ENCODE measurements at regions of chr21 and their contacts with region 1.

Region 1: DNA sequence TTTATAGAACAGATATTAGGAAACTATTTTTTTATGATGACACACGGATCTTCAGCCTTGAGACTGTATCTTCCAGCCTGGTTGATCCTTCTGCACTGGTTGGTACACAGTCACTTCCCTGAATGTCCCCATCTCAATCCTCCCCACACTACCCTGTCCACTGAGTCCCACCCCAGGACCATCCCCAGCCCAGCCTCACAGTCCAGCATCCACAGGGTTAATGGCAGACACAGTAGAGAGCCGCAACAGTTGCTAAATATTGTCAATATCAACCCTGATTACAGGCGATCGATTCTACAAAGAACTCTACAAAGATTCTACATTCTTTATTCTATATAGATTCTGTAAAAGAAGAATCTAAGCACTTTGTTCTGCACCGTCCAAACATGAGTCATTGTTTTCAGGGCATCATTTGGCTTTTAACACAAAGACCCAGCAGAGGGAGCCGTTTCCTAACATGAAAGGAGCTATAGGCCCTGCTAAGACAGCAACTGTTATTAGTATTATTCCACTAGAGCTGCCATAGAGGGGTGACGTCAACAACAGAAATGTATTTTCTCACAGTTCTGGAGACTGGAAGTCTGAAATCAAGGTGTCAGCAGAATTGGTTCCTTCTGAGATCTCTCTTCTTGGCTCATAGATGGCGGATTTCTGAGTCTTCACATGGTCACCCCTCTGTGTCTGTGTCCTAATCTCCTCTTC is 30.1 kb upstream of the IFNAR2 start:
- DNase-seq: peak; percentile 85
- H3K4me3 Mint-ChIP-seq: no peak overlapping the region
- H3K27ac Mint-ChIP-seq: peak overlapping the region; percentile 39
- H3K4me1 Mint-ChIP-seq: peaks cover 24% of the 10 kb centered on the region
- H3K27me3 Mint-ChIP-seq: no peaks in the 10 kb centered on the region

Region 2: GRCh38 chr21:32674731-32675130 is 524.9 kb before region 1 on chr21:
- CTCF ChIA-PET with region 1: no interaction called
- POLR2A ChIA-PET with region 1: no interaction called
- intact Hi-C with region 1: no loop called
- DNase-seq: no peak
- H3K4me3 Mint-ChIP-seq: no peak overlapping the region
- H3K27ac Mint-ChIP-seq: no peak overlapping the region
- H3K4me1 Mint-ChIP-seq: no peaks in the 10 kb centered on the region
- H3K27me3 Mint-ChIP-seq: no peaks in the 10 kb centered on the region

Region 3: GRCh38 chr21:32921632-32922230 is 277.9 kb before region 1 on chr21:
- CTCF ChIA-PET with region 1: interaction called, 24 read pairs
- POLR2A ChIA-PET with region 1: no interaction called
- intact Hi-C with region 1: no loop called
- DNase-seq: peak; percentile 59
- H3K4me3 Mint-ChIP-seq: no peak overlapping the region
- H3K27ac Mint-ChIP-seq: no peak overlapping the region
- H3K4me1 Mint-ChIP-seq: peaks cover 2% of the 10 kb centered on the region
- H3K27me3 Mint-ChIP-seq: peaks cover 2% of the 10 kb centered on the region

Region 4: DNA sequence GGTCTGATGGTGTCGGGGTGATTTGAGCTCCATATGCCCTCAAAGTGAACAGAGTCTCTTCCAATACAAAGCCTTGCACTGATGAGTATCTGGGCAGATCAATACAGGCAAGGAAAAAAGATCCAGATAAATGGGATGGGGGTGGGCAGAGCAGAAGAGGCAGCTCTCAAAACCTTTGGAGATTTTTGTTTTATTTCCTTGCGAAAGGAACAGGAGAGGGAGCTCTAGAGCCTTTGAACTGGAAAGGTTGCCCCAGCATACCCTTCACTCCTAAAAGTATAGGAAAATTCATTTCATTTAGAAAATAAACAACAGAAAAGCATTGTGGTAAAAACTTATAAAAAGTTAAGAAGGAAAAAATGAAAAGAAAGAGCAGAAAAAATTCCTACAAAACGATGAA is 205.4 kb before region 1 on chr21:
- CTCF ChIA-PET with region 1: interaction called, 17 read pairs
- POLR2A ChIA-PET with region 1: no interaction called
- intact Hi-C with region 1: loop called (anchors 5 kb)
- DNase-seq: no peak
- H3K4me3 Mint-ChIP-seq: no peak overlapping the region
- H3K27ac Mint-ChIP-seq: no peak overlapping the region
- H3K4me1 Mint-ChIP-seq: no peaks in the 10 kb centered on the region
- H3K27me3 Mint-ChIP-seq: peaks cover 16% of the 10 kb centered on the region

Region 5: GRCh38 chr21:33127154-33127893 is 72.3 kb before region 1 on chr21:
- CTCF ChIA-PET with region 1: interaction called, 12 read pairs
- POLR2A ChIA-PET with region 1: no interaction called
- intact Hi-C with region 1: loop called (anchors 2 kb)
- DNase-seq: peak; percentile 77
- H3K4me3 Mint-ChIP-seq: peak overlapping the region; percentile 38
- H3K27ac Mint-ChIP-seq: no peak overlapping the region
- H3K4me1 Mint-ChIP-seq: peaks cover 3% of the 10 kb centered on the region
- H3K27me3 Mint-ChIP-seq: peaks cover 14% of the 10 kb centered on the region

Region 6: GRCh38 chr21:33324291-33325221 is 124.9 kb after region 1 on chr21 and contains the start of gene IFNAR1:
- CTCF ChIA-PET with region 1: interaction called, 7 read pairs
- POLR2A ChIA-PET with region 1: no interaction called
- intact Hi-C with region 1: loop called (anchors 1 kb)
- DNase-seq: peak; percentile 99
- H3K4me3 Mint-ChIP-seq: no peak within 1 kb of the TSS
- H3K27ac Mint-ChIP-seq: no peak within 1 kb of the TSS
- H3K4me1 Mint-ChIP-seq: peaks cover 26% of the 10 kb centered on the region
- H3K27me3 Mint-ChIP-seq: no peaks in the 10 kb centered on the region
- total RNA-seq, gene IFNAR1: 28.0 to 32.0 TPM

Region 7: DNA sequence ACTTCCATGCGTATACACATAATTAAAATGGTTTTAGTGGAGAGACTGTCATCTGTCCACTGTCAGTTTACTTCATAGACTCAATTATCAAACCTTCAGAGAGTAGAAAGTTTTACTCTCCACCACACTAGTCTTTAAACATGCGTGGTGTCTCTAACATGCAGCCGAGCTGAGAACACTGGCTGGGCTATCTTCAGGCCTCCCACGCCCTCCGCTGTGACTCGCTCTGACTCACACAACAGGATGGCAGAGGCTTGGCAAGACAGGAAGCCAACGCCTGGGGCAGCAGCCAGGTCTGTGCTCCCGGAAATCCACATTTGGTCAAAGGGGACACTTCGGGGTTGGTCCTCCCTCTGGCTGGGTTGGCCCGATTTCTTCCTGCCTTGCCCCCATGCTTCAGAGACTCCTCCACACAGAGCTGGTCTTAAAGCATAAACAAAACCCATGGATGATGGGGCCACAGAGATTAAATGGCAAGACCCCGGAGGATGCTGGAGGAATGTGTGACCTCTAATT is 180.9 kb after region 1 on chr21:
- CTCF ChIA-PET with region 1: interaction called, 18 read pairs
- POLR2A ChIA-PET with region 1: interaction called, 3 read pairs
- intact Hi-C with region 1: no loop called
- DNase-seq: peak; percentile 97
- H3K4me3 Mint-ChIP-seq: peak overlapping the region; percentile 44
- H3K27ac Mint-ChIP-seq: peak overlapping the region; percentile 81
- H3K4me1 Mint-ChIP-seq: peaks cover 61% of the 10 kb centered on the region
- H3K27me3 Mint-ChIP-seq: peaks cover 10% of the 10 kb centered on the region

Region 8: DNA sequence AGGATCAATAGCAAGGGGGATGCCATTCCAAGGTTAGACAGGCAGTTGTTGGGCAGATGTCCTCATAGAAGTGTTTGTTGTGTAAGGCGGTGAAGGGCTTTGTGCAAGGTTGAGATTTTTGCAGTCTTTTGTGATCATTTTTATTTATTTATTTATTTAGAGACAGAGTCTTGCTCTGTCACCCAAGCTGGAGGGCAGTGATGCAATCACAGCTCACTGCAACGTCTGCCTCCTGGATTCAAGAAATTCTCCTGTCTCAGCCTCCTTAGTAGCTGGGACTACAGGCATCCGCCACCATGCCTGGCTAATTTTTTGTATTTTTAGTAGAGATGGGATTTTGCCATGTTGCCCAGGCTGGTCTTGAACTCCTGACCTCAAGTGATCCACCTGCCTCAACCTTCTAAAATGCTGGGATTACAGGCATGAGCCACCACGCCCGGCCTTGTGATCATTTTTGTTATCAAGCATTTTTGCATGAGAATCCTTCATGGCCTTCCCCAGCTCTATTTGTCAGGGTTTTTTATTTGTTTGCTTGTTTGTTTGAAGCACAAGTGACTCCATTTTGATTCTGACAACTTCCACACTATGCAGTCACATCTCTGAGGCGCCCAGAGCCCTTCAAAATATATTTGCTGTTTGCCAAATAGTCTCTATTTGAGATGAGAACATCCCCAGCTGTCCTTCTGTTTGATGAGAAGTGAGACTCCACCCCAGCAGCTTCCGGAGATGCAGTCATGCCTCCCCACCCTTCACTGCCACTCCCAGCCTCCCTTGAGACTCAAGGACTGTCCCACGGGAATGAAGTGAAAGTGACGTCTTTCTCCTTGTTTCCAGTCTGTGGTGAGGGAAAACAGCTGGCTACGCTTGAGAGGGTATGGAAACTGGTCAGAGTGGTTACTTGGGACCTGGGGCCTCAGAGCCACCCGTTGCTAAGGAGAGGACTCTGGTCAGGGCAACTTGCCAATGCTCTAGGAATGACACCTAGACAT is 242.1 kb after region 1 on chr21:
- CTCF ChIA-PET with region 1: interaction called, 50 read pairs
- POLR2A ChIA-PET with region 1: no interaction called
- intact Hi-C with region 1: loop called (anchors 1 kb)
- DNase-seq: no peak
- H3K4me3 Mint-ChIP-seq: no peak overlapping the region
- H3K27ac Mint-ChIP-seq: no peak overlapping the region
- H3K4me1 Mint-ChIP-seq: peaks cover 3% of the 10 kb centered on the region
- H3K27me3 Mint-ChIP-seq: no peaks in the 10 kb centered on the region